ENCODE measurements at regions of chr14 and their contacts with region 1.

Region 1: GRCh38 chr14:79836577-79836976 is 374.7 kb downstream of the DIO2 start:
- DNase-seq: no peak
- ATAC-seq: no peak
- H3K4me3 ChIP-seq: no peak overlapping the region
- H3K27ac ChIP-seq: no peak overlapping the region
- H3K4me1 ChIP-seq: no peaks in the 10 kb centered on the region
- H3K27me3 ChIP-seq: no peaks in the 10 kb centered on the region
- CTCF ChIP-seq: no peak
- EP300 ChIP-seq: no peak
- POLR2A ChIP-seq: no peak
- RAD21 ChIP-seq: no peak

Region 2: DNA sequence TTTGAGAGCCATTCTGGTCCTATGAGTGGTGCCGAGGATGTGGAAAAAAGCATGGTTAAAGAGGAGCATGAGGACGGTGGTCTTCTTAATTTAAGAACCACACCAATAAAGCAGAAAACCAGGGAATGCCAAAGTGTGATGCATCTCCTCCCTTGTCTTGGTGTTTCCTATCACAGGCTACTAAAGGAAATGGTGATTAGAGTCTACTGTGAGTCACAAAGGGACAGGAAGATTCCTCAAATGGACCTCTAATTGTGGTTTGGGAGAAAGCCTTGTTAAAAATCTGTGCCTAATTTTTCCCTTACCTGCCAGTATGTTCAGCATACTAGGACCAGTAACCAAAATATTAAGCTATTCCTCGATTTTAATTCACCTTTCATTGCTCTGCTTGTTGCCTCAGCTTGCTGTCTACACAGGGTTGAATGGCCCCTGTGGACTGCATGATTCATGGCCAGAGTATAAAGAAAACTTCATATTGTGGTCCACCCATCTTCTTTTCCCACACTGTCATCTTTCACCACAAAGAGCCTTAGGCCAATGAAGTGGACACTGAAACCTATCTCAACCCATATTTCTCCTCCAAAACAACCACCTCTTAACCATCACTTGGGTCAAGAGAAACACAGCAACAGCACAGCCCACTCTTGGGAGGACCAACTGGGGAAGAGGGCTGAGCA is 335.9 kb after region 1 on chr14:
- CTCF ChIA-PET with region 1: no interaction called
- POLR2A ChIA-PET with region 1: no interaction called
- in situ Hi-C with region 1: no loop called
- intact Hi-C with region 1: loop called (anchors 5 kb)
- DNase-seq: no peak
- ATAC-seq: no peak
- H3K4me3 ChIP-seq: no peak overlapping the region
- H3K27ac ChIP-seq: no peak overlapping the region
- H3K4me1 ChIP-seq: no peaks in the 10 kb centered on the region
- H3K27me3 ChIP-seq: no peaks in the 10 kb centered on the region
- CTCF ChIP-seq: no peak
- EP300 ChIP-seq: no peak
- POLR2A ChIP-seq: no peak
- RAD21 ChIP-seq: no peak